CD8-positive, alpha-beta T cell (primary cell): ENCODE measurements at regions of chr21 and their contacts with region 1.

Region 1: DNA sequence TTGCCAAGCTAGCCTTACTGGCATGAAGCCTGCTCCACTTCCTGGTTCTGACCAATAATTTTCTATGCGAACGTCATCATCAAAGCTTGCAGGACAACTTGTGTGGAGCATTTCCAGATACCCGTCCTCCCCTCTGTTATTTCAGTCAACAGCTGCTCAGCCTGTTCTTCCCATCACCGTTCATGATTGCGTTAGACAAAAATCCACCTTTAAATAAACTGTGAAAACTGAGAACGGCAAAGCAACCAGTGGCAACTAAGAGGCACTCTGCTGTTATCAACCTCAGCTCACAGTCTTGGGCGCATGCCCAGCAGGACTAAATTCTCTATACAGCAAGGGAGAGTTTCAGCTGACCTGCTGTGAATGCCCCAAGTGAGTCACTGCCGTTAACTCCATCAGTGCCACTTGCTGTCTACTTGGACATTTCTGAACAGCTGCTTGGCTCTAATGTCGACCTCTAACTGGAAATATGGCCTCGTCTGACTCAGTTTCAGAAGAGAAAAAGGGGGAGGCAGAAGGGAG is 207.4 kb upstream of the RUNX1 start:
- DNase-seq: no peak
- ATAC-seq: no peak
- H3K4me3 ChIP-seq: no peak overlapping the region
- H3K4me3 Mint-ChIP-seq: no peak overlapping the region
- H3K27ac ChIP-seq: no peak overlapping the region
- H3K27ac Mint-ChIP-seq: no peak overlapping the region
- H3K4me1 ChIP-seq: no peaks in the 10 kb centered on the region
- H3K4me1 Mint-ChIP-seq: no peaks in the 10 kb centered on the region
- H3K27me3 ChIP-seq: no peaks in the 10 kb centered on the region
- H3K27me3 Mint-ChIP-seq: peaks cover 2% of the 10 kb centered on the region
- CTCF ChIP-seq: no peak

Region 2: DNA sequence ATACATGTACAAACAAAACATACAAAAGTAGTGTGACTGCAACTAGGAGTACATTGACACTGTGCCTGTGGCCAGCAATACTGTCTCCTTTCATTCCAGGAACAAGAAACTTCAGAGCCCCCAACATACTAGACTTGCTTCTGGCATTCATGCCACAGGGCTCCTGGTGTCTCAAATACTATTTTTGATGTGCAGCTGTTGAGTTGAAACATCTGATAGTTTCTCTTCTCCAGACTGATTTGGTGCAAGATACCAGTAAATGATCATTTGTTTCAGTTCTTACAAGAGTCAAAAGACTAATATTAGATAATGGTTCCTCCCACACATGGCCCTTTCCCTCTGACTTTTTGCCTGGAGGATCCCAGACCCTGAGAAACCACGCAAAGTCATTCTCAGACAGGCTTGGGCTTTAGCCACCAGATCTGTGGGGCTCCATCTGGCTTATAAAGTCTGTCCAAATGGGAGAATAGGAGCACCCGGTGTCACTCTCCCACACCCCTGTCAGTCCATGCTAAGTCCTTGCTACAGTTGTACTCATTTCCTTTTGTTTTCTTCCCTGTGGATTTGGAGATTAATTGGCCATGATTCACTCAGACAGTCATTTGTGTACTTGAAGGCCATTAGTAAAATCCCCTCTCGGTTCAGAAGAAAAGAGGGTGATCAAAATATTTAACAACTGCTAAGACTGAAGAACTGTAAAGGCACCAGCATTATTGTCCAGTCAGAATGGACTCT is 44.0 kb before region 1 on chr21:
- CTCF ChIA-PET with region 1: no interaction called
- POLR2A ChIA-PET with region 1: no interaction called
- intact Hi-C with region 1: loop called in 1 of 2 experiments (anchors 5 kb)
- DNase-seq: no peak
- ATAC-seq: no peak
- H3K4me3 ChIP-seq: no peak overlapping the region
- H3K4me3 Mint-ChIP-seq: no peak overlapping the region
- H3K27ac ChIP-seq: no peak overlapping the region
- H3K27ac Mint-ChIP-seq: no peak overlapping the region
- H3K4me1 ChIP-seq: no peaks in the 10 kb centered on the region
- H3K4me1 Mint-ChIP-seq: no peaks in the 10 kb centered on the region
- H3K27me3 ChIP-seq: no peaks in the 10 kb centered on the region
- H3K27me3 Mint-ChIP-seq: no peaks in the 10 kb centered on the region
- CTCF ChIP-seq: no peak